GM10248 (cell line): ENCODE measurements at regions of chr16 and their contacts with region 1.

Region 1: GRCh38 chr16:89484923-89485679 is 5.3 kb downstream of the ANKRD11 start:
- DNase-seq: no peak
- CTCF ChIP-seq: no peak

Region 2: GRCh38 chr16:89343501-89344457 is 141.3 kb before region 1 on chr16:
- CTCF ChIA-PET with region 1: no interaction called
- POLR2A ChIA-PET with region 1: no interaction called
- DNase-seq: no peak
- CTCF ChIP-seq: no peak

Region 3: GRCh38 chr16:89473791-89474414 is 11.2 kb before region 1 on chr16:
- CTCF ChIA-PET with region 1: interaction called, 4 read pairs
- POLR2A ChIA-PET with region 1: interaction called, 10 read pairs
- DNase-seq: no peak
- CTCF ChIP-seq: no peak